Cardiac septum (tissue), 1 donor: ENCODE measurements at regions of chrX and their contacts with region 1.

Region 1: DNA sequence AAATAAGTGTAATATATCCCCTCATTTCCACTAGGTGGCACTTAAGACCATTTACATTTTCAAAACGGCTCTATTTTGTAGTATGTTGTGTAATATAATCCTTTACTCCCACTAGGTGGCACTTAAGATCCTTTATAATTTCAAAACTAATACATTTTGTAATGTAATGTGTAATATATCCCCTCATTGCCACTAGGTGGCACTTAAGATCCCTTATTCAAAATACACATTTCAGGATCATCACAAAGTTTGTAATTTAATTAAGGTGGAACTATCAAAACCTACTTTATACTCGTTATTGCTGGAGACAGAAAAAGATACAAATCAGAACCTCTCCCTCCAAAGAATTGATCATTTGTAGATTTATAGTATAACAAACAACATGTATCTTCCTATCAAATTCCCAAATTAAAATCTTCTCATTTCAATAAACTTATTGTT is 132.5 kb downstream of the ARHGAP6 start:
- DNase-seq: no peak

Region 2: DNA sequence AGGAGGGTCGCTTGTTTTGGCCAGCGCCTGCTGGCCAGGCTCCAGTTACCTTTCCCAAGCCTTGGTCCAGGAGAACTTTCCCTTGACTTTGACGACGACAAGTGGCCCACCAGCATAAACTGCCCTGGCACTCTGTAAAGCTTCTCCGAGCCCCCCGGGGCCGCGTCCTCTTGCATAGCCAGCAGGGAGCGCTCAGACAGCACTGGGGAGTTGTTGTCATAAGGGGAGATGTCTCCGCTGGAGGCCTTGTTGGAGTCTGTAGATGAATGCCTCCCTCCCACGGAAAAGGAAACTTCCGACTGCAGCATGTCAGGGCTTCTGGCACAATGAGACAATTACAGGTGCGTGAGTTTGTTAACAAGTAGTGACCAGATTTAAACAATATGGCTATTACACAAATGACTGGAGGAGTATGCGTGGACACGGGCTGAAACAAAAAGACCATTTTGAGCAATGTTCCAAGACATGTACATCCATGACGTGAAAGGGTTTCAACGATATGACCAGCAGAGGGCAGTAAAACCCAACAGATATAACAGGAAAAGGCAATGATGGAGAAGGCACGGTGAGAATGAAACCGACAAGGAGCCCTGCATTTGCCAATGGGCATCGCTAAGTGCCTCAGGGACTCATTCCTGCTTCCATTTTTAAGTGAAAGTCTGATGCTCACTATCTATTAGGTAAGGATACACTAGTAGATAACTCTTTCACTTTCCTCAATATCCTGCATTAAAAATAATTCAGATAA is 389.1 kb before region 1 on chrX:
- intact Hi-C with region 1: loop called (anchors 5 kb)
- DNase-seq: no peak

Region 3: GRCh38 chrX:11239233-11239632 is 294.0 kb before region 1 on chrX:
- intact Hi-C with region 1: no loop called
- DNase-seq: no peak

Region 4: DNA sequence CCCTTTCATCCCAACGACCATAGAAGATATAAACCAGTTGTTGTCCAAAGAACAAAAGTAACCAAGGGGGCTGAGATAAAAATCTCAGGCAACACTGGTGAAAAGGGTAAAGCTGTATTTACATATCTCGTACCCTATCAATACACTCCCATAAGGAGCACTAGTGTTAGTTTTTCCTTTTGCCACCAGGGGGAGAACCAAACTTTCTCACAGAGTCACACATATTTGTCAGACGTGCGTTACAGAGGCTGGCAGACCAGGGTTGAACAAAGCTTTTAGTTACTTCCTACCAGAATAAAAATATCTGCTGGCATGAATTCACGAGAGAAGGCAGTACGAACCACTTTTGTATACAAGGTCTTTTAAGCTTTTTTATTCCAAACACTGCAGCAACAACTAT is 151.8 kb before region 1 on chrX:
- intact Hi-C with region 1: loop called (anchors 5 kb)
- DNase-seq: no peak

Region 5: GRCh38 chrX:11724122-11725017 is 191.1 kb after region 1 on chrX:
- intact Hi-C with region 1: loop called (anchors 2 kb)
- DNase-seq: no peak

Region 6: DNA sequence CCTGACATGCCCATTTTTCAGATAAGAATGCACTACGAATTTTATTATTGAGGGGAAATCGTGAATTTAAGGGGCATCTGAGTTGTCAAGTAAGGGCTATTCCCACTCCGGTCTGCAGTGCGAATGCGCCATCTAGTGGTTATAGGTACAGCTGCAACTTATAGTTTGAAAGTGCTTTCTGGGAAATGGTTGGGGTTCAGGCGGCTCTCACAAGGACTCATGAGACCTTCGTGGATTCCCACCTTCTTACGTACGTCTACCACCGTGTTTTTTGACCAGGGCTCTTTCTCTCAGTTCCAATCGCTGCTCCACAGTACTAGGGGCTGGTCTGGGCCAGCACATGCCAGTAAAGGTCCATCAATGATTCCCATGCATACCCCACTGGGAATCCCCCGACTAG is 237.1 kb after region 1 on chrX:
- intact Hi-C with region 1: loop called (anchors 2 kb)
- DNase-seq: no peak

Region 7: GRCh38 chrX:12401252-12401651 is 868.0 kb after region 1 on chrX:
- intact Hi-C with region 1: no loop called
- DNase-seq: no peak